CD4-positive, alpha-beta T cell (primary cell): ENCODE measurements at regions of chr14 and their contacts with region 1.

Region 1: DNA sequence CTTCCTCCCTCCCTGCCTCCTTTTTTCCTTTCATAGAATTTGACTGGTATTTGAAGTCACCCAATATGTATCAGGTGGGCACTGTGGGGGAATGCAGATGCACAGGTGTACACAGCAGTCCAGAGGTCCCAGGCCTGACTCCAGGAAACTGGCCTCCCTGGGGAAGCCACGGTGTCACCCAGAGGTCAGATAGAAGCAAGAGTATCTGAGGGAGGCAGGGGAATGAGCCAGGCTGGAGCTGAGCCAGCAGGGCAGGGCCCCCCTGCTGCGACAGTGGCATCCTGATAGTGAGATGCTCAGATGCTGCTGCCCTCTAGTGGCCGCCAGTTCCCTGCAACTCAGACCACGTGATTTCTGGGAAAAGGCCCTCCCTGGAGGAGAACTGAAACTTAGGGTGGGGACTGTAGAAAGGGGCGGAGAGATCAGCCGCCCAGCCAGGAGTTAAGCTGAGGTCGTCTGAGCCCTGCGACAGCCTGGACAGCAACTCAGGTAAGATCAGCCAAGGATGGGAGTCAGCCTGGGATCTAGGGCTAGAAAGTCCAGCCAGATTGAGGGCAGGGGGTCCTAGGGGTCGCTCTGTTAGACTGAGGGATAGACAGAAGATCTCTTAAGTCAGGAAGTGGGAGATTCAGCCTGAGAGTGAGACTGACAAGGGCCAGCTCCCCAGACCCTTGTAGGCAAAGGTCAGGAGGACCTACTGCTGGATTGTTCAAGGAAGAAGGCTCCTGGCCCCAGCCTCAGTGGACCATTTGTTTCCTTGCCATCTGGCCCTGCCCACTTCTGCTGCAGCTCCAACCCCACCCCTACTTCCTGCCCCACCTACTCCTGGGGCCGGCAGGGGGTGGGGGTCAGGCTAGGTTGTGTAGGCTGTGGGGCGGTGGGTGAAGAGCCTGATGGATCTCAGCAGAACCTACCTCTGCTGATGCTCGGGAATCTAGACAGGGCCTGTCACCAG is at the start of gene IRF9:
- DNase-seq: peak; percentile 94 to 100 (median 98)
- ATAC-seq: peak; percentile 84
- H3K4me3 ChIP-seq: peak within 1 kb of the TSS; percentile 95
- H3K4me3 Mint-ChIP-seq: peak within 1 kb of the TSS; percentile 95
- H3K27ac ChIP-seq: peak within 1 kb of the TSS; percentile 97 to 98
- H3K27ac Mint-ChIP-seq: peak within 1 kb of the TSS; percentile 98
- H3K4me1 ChIP-seq: peaks cover 52% of the 10 kb centered on the region
- H3K4me1 Mint-ChIP-seq: peaks cover 57% of the 10 kb centered on the region
- H3K27me3 ChIP-seq: no peaks in the 10 kb centered on the region
- H3K27me3 Mint-ChIP-seq: no peaks in the 10 kb centered on the region
- CTCF ChIP-seq: peak; percentile 84
- total RNA-seq, gene IRF9: 248 to 262 TPM

Region 2: GRCh38 chr14:24013654-24014514 is 147.2 kb before region 1 on chr14:
- CTCF ChIA-PET with region 1: no interaction called
- POLR2A ChIA-PET with region 1: no interaction called
- intact Hi-C with region 1: loop called (anchors 1 to 5 kb)
- DNase-seq: peak in 12 of 14 experiments; percentile 9 to 85 (median 32)
- ATAC-seq: peak; percentile 98
- H3K4me3 ChIP-seq: no peak overlapping the region
- H3K4me3 Mint-ChIP-seq: no peak overlapping the region
- H3K27ac ChIP-seq: no peak overlapping the region
- H3K27ac Mint-ChIP-seq: no peak overlapping the region
- H3K4me1 ChIP-seq: peaks cover 11% of the 10 kb centered on the region
- H3K4me1 Mint-ChIP-seq: peaks cover 25% of the 10 kb centered on the region
- H3K27me3 ChIP-seq: no peaks in the 10 kb centered on the region
- H3K27me3 Mint-ChIP-seq: no peaks in the 10 kb centered on the region
- CTCF ChIP-seq: peak; percentile 92

Region 3: DNA sequence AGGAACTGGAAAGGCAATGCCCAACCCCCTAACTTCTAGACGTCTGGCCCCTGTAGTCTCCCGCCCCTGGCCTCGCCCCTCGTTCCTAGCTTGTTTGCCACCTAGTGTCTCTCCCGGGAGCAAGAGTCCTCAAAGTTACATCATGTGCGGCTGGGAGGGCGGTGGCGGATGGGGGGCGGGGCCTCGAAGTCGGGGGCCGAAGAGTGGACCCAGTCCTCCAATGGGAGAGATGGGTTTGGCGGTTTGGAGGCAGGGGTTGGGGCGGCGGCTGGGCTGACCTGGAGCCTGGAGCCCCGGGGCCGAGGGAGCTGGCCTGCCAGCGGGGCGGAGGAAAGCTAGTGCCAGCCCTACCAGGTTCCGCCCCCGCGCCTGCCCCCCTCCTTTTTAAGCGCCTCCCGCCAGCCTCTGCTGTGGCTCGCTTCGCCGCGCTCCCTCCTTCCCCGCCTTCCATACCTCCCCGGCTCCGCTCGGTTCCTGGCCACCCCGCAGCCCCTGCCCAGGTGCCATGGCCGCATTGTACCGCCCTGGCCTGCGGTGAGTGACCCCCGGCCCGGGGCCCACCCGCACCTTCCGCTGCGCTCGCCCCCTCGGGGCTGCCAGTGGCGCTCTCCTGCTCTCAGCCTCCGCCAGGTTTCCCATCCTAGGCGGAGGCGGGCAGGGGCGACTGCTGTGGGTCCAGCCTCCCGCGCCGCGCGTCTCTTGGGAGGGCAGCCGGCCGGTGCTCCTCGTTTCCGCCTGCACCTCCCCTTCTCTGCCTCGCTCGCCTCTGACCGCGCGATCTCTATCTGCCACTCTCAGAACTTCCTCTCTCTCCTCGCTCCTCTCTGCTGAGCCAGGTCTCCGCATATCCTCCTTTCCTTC is 67.0 kb before region 1 on chr14 and contains the start of gene PCK2:
- CTCF ChIA-PET with region 1: interaction called, 6 read pairs
- POLR2A ChIA-PET with region 1: interaction called, 24 read pairs
- intact Hi-C with region 1: no loop called
- DNase-seq: peak; percentile 53 to 82 (median 67)
- ATAC-seq: peak; percentile 77
- H3K4me3 ChIP-seq: peak within 1 kb of the TSS; percentile 97
- H3K4me3 Mint-ChIP-seq: peak within 1 kb of the TSS; percentile 97
- H3K27ac ChIP-seq: peak within 1 kb of the TSS; percentile 71 to 78
- H3K27ac Mint-ChIP-seq: peak within 1 kb of the TSS; percentile 90
- H3K4me1 ChIP-seq: peaks cover 29% of the 10 kb centered on the region
- H3K4me1 Mint-ChIP-seq: peaks cover 37% of the 10 kb centered on the region
- H3K27me3 ChIP-seq: no peaks in the 10 kb centered on the region
- H3K27me3 Mint-ChIP-seq: no peaks in the 10 kb centered on the region
- CTCF ChIP-seq: no peak
- total RNA-seq, gene PCK2: 5.2 to 7.4 TPM

Region 4: GRCh38 chr14:24141097-24141880 is 19.8 kb before region 1 on chr14 and contains the start of gene EMC9:
- CTCF ChIA-PET with region 1: interaction called, 33 read pairs
- POLR2A ChIA-PET with region 1: interaction called, 154 read pairs
- intact Hi-C with region 1: loop called (anchors 1 to 2 kb)
- DNase-seq: peak; percentile 97 to 100 (median 99)
- ATAC-seq: peak; percentile 90
- H3K4me3 ChIP-seq: peak within 1 kb of the TSS; percentile 92
- H3K4me3 Mint-ChIP-seq: peak within 1 kb of the TSS; percentile 95
- H3K27ac ChIP-seq: peak within 1 kb of the TSS; percentile 62 to 71
- H3K27ac Mint-ChIP-seq: peak within 1 kb of the TSS; percentile 90
- H3K4me1 ChIP-seq: peaks cover 73% of the 10 kb centered on the region
- H3K4me1 Mint-ChIP-seq: peaks cover 76% of the 10 kb centered on the region
- H3K27me3 ChIP-seq: no peaks in the 10 kb centered on the region
- H3K27me3 Mint-ChIP-seq: no peaks in the 10 kb centered on the region
- CTCF ChIP-seq: no peak
- total RNA-seq, gene EMC9: 11.8 to 13.1 TPM

Region 5: DNA sequence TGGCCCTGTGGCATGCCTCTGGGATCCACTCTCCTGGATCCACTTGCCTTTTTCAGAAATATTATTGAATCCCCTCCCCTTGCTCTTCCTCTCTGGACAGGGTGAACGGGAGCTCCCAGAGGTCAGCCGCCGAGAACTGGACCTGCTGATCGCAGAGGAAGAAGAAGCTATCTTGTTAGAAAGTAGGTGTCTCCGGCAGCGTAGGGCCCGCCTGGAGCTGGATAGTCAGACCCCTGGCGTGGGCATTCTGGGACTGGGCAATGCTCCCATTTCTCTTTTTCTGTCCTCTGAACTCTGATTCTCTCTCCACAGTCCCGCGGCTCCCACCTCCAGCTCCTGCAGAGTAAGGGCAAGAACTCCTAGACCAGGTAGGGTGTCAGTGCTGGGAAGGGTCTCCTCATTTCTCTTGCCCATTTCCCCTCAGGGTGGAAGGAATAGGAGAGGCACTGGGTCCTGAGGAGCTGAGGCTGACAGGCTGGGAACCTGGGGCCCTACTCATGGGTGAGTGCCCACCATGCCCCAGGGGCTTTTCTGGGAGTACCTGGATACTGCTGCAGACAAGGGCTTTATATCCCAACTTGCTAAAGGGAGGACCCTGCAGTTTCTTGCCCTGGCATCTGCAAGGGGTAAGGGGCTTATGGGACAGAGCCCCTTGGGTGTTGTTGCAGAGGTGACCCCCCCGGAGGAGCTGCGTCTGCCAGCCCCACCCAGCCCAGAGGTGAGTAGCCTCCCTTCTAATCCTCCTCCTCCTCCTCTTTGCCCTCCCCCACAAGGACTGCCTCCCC is 16.1 kb after region 1 on chr14:
- CTCF ChIA-PET with region 1: interaction called, 9 read pairs
- POLR2A ChIA-PET with region 1: interaction called, 53 read pairs
- intact Hi-C with region 1: no loop called
- DNase-seq: no peak
- ATAC-seq: no peak
- H3K4me3 ChIP-seq: no peak overlapping the region
- H3K4me3 Mint-ChIP-seq: no peak overlapping the region
- H3K27ac ChIP-seq: no peak overlapping the region
- H3K27ac Mint-ChIP-seq: no peak overlapping the region
- H3K4me1 ChIP-seq: peaks cover 8% of the 10 kb centered on the region
- H3K4me1 Mint-ChIP-seq: peaks cover 17% of the 10 kb centered on the region
- H3K27me3 ChIP-seq: no peaks in the 10 kb centered on the region
- H3K27me3 Mint-ChIP-seq: no peaks in the 10 kb centered on the region
- CTCF ChIP-seq: no peak

Region 6: DNA sequence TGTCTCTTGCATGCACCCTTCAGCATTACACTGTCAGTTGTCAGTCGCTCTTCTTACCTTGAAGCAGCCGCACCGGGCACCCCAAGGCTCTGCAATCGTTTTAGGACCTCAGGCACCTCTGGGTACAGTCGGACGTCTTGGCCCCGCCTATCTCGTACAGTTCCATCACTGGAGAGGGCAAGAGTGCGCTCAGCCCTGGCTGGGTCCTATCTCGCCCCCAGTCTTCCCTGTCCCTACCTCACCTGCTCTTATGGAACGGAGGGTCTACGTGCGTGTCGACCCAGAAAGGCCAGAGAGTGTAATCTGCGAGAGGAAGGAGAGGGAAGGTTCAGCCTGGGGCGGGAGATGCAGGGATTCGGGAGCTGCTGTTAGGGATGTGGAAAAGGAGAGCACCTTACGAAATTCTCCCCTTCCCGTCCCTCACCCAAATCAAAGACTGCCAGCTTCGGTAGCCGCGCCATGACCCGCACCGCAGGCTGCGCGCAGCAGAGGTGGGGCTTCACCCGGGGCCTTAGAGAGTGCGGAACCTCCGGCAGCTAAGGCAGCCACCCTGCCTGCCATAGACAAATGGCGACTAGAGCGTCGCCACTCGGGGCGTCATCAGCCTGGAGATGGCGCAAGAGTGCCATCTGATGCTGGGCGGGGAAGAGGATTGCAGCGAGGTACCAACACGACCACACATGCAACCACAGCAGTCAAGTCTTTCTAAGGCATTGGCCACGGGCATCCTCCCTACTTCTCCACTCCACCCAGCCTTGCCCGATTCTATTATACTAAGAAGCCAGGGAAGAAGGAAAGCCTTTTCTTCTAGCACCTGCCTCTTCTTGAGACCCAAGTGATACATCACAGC is 54.6 kb after region 1 on chr14 and contains the start of gene MDP1:
- CTCF ChIA-PET with region 1: interaction called, 11 read pairs
- POLR2A ChIA-PET with region 1: interaction called, 32 read pairs
- intact Hi-C with region 1: loop called in 1 of 2 experiments (anchors 2 kb)
- DNase-seq: peak; percentile 79 to 97 (median 86)
- ATAC-seq: peak; percentile 72
- H3K4me3 ChIP-seq: peak within 1 kb of the TSS; percentile 84
- H3K4me3 Mint-ChIP-seq: peak within 1 kb of the TSS; percentile 97
- H3K27ac ChIP-seq: peak within 1 kb of the TSS; percentile 92
- H3K27ac Mint-ChIP-seq: peak within 1 kb of the TSS; percentile 96
- H3K4me1 ChIP-seq: peaks cover 44% of the 10 kb centered on the region
- H3K4me1 Mint-ChIP-seq: peaks cover 49% of the 10 kb centered on the region
- H3K27me3 ChIP-seq: no peaks in the 10 kb centered on the region
- H3K27me3 Mint-ChIP-seq: no peaks in the 10 kb centered on the region
- CTCF ChIP-seq: peak; percentile 67
- total RNA-seq, gene MDP1: 3.2 to 3.7 TPM